ENCODE measurements at regions of chr3 and their contacts with region 1.

Region 1: DNA sequence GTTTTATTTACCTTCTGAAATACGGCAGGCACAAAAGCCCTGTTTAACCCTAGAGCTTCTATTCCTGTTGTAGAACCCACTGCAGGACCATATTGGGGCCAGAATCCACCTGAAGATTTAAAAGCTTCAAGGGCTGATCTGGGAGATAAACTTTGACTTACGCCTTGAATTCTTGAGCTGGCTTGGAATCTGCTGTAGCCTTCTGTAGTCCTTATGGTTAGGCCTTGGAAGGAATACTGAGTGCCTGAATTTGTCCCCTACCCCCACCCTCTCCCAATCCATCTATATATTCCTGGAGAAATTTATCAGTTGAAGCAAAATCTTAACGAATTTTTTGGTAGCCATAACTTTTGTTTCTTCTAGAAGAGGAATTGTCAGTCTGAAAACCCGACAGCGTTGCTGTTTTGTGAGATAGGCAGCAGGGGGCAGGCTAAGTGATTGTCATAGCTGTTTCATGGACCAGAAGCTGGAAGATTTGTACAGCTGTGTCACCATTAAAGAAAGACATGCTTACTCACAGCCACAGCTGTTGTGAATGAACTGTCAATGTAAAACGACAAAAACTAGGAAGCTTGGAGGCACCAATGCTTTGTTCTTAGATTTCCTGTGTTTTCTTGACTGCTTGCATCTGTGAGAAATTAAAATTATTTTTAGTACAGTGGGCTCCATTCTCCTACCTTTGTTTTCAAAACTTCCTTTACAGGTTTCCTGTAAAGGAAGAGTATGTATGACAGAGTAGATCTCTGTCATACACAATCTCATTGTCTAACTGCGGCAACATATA is 12.8 kb downstream of the LXN start:
- DNase-seq: peak; percentile 66
- H3K4me3 Mint-ChIP-seq: no peak overlapping the region
- H3K27ac Mint-ChIP-seq: no peak overlapping the region
- H3K4me1 Mint-ChIP-seq: peaks cover 8% of the 10 kb centered on the region
- H3K27me3 Mint-ChIP-seq: no peaks in the 10 kb centered on the region

Region 2: DNA sequence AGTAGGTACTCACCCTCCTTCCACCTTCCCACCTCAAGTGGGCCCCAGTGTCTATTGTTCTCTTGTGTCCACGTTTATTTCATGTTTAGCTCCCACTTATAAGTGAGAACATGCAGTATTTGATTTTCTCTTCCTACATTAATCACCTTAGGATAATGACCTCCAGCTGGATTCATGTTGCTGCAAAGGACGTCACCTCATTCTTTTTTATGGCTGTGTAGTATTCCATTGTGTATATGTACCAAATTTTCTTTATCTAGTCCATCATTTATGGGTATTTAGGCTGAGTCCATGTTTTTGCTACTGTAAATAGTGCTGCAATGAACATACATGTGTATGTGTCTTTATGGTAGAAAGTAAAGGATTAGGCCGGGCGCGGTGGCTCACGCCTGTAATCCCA is 94.6 kb before region 1 on chr3:
- CTCF ChIA-PET with region 1: no interaction called
- DNase-seq: no peak
- H3K4me3 Mint-ChIP-seq: no peak overlapping the region
- H3K27ac Mint-ChIP-seq: no peak overlapping the region
- H3K4me1 Mint-ChIP-seq: no peaks in the 10 kb centered on the region
- H3K27me3 Mint-ChIP-seq: peaks cover 13% of the 10 kb centered on the region

Region 3: GRCh38 chr3:158644345-158644908 is 15.2 kb before region 1 on chr3 and contains the start of gene GFM1:
- CTCF ChIA-PET with region 1: interaction called, 37 read pairs
- DNase-seq: peak; percentile 93
- H3K4me3 Mint-ChIP-seq: peak within 1 kb of the TSS; percentile 93
- H3K27ac Mint-ChIP-seq: peak within 1 kb of the TSS; percentile 81
- H3K4me1 Mint-ChIP-seq: peaks cover 30% of the 10 kb centered on the region
- H3K27me3 Mint-ChIP-seq: no peaks in the 10 kb centered on the region

Region 4: GRCh38 chr3:158672293-158673176 is 12.9 kb after region 1 on chr3 and contains the start of gene LXN:
- CTCF ChIA-PET with region 1: interaction called, 37 read pairs
- DNase-seq: peak; percentile 91
- H3K4me3 Mint-ChIP-seq: peak within 1 kb of the TSS; percentile 83
- H3K27ac Mint-ChIP-seq: peak within 1 kb of the TSS; percentile 84
- H3K4me1 Mint-ChIP-seq: peaks cover 26% of the 10 kb centered on the region
- H3K27me3 Mint-ChIP-seq: no peaks in the 10 kb centered on the region

Region 5: GRCh38 chr3:158679547-158680000 is 19.9 kb after region 1 on chr3:
- CTCF ChIA-PET with region 1: interaction called, 12 read pairs
- DNase-seq: no peak
- H3K4me3 Mint-ChIP-seq: no peak overlapping the region
- H3K27ac Mint-ChIP-seq: no peak overlapping the region
- H3K4me1 Mint-ChIP-seq: no peaks in the 10 kb centered on the region
- H3K27me3 Mint-ChIP-seq: no peaks in the 10 kb centered on the region

Region 6: DNA sequence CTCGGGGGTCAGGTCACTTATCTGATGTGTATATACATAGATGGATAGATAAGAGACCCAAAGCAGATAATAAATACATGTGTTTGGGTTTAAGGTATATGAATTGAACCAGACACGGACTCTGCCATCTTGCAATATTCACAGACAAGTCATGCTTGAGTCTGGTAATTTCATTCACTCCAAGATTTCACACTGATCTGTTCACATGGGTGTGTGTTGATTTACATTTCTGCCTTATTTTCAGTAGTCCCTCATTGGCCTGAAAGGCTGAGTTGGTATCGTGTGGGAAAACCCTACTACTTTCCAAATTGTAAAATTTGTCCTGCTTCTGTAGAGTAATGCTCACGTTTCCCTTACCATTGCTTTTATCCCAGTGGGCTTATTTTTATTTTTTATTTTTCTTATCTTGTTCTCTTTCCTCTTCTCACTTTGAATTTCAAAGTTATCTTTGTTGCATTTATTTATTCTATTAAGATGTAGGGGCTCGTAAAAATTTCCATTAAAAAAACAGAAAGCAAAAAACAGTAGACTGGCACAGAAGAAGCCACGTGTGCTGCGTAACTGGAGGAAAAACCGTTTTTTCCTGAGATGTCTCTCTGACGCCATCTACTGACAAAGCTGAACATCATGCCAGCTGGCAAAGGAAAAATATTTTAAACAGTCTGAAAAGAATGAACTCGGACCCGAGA is 131.4 kb after region 1 on chr3:
- CTCF ChIA-PET with region 1: interaction called, 83 read pairs
- DNase-seq: peak; percentile 47
- H3K4me3 Mint-ChIP-seq: no peak overlapping the region
- H3K27ac Mint-ChIP-seq: no peak overlapping the region
- H3K4me1 Mint-ChIP-seq: peaks cover 4% of the 10 kb centered on the region
- H3K27me3 Mint-ChIP-seq: peaks cover 11% of the 10 kb centered on the region